Pancreas (tissue), 10 donors: ENCODE measurements at regions of chr9 and their contacts with region 1.

Region 1: DNA sequence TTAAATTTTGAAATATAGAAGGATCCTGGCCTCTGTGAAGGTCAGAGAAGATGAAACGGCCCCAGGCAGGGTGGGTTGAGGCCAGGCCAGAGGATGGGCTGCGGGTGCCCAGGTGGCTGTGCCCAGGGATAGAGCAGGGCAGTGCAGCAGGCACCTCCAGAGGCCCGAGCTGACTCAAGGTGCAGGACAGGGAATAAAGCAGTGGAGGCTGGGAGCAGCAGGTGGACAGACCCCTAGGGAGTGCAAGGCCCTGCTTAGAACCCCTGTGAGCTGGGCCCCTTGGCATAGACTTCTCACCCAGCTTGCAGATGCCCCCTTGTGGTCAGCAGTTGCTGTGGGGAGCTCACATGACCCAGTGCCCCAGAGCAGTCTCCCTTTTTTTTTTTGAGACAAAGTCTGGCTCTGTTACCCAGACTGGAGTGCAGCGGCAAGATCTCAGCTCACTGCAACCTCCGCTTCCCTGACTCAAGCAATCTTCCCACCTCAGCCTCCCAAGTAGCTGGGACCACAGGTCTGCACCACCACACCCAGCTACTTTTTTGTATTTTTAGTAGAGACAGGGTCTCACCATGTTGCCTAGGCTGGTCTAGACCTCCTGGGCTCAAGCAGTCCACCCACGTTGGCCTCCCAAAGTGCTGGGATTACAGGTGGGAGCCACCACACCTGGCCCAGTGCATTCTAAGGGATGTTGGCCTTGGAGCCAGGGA is 118.8 kb downstream of the WNK2 start:
- DNase-seq: peak; percentile 57 to 76 (median 73)
- ATAC-seq: peak; percentile 59 to 77 (median 68)
- H3K4me3 ChIP-seq: no peak overlapping the region
- H3K27ac ChIP-seq: peak overlapping the region in 1 of 4 donors; percentile 22
- H3K4me1 ChIP-seq: peaks cover 0 to 2% (median 0%) of the 10 kb centered on the region in 3 donors
- H3K27me3 ChIP-seq: no peaks in the 10 kb centered on the region
- CTCF ChIP-seq: peak; percentile 34 to 51 (median 49)

Region 2: DNA sequence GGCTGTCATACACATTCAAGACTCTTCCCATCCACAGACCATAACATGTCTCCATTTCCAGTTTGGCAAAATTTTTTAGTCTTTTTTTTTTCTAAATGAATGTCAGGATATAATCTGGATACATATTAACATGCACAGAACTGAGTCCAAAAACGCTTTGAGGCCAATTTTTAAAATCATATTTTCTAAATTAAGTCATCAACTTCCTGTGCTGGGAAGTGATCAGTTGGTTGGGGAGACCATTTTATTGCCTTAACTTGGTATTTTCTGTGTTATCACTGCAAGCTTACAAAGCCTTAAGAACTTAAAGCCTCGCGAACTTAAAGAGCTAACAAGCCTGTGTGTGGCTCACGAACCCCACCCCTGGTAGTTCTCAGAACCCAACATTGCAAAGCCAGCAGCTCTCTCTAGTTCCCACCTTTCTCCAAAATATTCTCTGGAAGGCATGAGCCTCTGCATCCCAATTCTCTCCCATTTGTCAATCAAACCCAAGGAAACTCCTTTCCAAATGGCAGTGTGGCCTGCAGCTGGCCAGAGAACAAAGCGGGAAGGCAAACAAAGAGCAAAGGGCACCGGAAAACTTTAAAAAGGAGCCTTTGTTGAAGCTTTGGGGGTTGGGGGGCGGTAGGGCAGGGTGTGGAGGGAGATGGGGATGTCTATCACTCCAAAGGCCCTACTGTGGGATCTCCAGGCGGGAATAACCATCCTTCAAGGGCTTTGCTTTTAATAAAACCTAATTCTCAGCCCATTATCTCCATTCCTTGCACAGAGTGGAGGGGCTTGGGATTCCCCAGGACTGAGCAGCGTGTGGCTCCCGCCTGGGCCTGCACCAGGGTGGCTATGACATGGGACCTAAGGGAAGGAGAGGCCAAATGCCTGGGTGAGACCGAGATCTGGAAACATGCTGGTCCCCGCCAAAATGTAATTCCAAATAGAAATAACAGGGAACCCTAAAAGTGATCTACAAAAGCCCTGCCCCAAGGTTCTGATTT is 1417.7 kb before region 1 on chr9:
- intact Hi-C with region 1: no loop called
- DNase-seq: no peak
- ATAC-seq: no peak
- H3K4me3 ChIP-seq: no peak overlapping the region
- H3K27ac ChIP-seq: no peak overlapping the region
- H3K4me1 ChIP-seq: no peaks in the 10 kb centered on the region
- H3K27me3 ChIP-seq: no peaks in the 10 kb centered on the region
- CTCF ChIP-seq: no peak

Region 3: GRCh38 chr9:93119953-93120845 is 182.5 kb before region 1 on chr9:
- intact Hi-C with region 1: no loop called
- DNase-seq: peak; percentile 85 to 94 (median 92)
- ATAC-seq: peak; percentile 89 to 92 (median 90)
- H3K4me3 ChIP-seq: no peak overlapping the region
- H3K27ac ChIP-seq: peak overlapping the region in 2 of 4 donors; percentile 39 to 64
- H3K4me1 ChIP-seq: peaks cover 3 to 9% (median 4%) of the 10 kb centered on the region in 3 donors
- H3K27me3 ChIP-seq: no peaks in the 10 kb centered on the region
- CTCF ChIP-seq: peak in 3 of 4 donors; percentile 26 to 43 (median 31)

Region 4: DNA sequence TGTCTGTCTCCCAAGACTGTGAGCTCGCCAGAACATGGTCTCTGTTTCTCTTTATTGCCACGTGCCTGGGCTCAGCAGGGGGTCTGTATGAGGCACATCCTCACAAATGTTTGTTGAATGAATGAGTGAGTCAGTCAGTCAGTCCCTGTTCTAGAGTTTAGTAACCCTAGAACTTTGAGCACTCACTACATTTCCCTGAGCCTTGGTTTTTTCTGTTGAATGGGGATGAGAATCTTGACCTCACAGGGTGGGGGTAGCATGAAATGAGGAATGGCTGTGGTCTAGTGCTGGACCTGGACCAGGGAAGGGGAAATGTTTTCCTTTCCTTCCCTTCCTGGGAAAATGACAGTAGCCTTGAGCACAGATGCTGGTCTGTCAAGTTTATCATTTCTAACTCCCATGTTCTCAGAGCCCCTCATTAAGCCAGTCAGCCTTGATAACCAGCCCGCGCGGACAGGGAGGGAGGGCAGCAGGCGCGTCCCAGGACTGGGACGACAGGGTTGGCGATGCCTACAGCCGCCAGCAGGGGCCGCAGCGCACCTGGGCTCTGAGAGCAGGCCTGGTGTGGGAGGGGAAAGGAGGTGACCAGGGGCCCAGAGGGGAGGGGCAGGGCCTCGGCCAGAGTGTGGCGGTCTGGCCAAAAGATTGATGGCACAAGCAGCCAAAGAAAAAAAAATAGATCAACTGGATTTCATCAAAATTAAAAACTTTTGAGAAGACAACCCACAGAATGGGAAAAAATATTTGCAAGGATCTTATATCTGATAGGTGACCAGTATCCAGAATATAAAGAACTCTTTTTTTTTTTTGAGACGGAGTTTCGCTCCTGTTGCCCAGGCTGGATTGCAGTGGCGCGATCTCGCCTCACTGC is 142.9 kb before region 1 on chr9:
- intact Hi-C with region 1: loop called (anchors 5 kb)
- DNase-seq: peak; percentile 84 to 97 (median 89)
- ATAC-seq: peak; percentile 97 to 100 (median 100)
- H3K4me3 ChIP-seq: no peak overlapping the region
- H3K27ac ChIP-seq: no peak overlapping the region
- H3K4me1 ChIP-seq: no peaks in the 10 kb centered on the region
- H3K27me3 ChIP-seq: no peaks in the 10 kb centered on the region
- CTCF ChIP-seq: peak; percentile 81 to 94 (median 93)

Region 5: GRCh38 chr9:93183609-93184431 is 118.9 kb before region 1 on chr9 and contains the start of gene WNK2:
- intact Hi-C with region 1: loop called in 1 of 3 experiments (anchors 10 kb)
- DNase-seq: peak in 5 of 6 donors; percentile 58 to 85 (median 77)
- ATAC-seq: peak; percentile 70 to 83 (median 76)
- H3K4me3 ChIP-seq: peak within 1 kb of the TSS; percentile 59 to 76 (median 66)
- H3K27ac ChIP-seq: peak within 1 kb of the TSS; percentile 35 to 85 (median 74)
- H3K4me1 ChIP-seq: peaks cover 13 to 27% (median 23%) of the 10 kb centered on the region in 3 donors
- H3K27me3 ChIP-seq: no peaks in the 10 kb centered on the region
- CTCF ChIP-seq: no peak
- total RNA-seq, gene WNK2: 53.5 to 114 (median 89.4) TPM

Region 6: DNA sequence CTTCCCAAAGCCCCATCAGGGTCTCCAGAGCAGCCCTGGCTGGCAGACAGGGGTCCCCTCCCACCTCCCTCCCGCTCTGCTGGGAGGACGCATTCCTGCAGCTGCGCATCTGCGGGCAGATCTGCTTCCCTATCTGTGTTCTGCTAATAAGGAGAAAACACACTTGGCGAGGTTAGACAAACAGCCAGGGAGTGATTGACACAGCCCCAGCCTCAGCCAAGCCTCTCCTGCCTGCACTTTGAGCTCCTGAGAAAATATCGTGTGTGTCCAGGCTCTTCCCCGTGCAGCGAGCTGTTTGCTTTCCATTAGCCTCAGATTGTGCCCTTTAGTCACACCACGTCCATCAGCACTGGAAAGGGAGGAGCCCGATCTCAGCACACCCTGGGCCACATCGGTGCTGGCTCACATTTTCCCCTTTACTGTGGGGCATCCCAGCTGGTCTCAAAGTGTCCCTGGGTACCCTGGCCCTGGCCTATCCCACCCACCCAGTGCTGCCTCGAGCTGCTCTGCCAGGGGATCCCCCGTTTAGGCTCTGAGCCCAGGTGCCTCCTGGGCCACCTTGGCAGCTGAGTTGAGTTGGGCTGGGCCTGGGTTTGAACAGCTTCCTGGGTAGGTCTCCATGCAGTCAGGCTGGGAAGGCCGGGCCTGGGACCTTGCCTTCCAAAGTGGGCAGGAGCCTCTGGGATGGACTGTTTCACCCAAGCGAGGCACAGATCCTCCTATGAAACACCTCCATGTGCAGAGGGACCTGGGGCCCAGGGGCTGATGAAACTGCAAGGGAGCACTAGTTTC is 591.4 kb after region 1 on chr9:
- intact Hi-C with region 1: no loop called
- DNase-seq: peak; percentile 66 to 89 (median 86)
- ATAC-seq: peak; percentile 94 to 98 (median 98)
- H3K4me3 ChIP-seq: no peak overlapping the region
- H3K27ac ChIP-seq: peak overlapping the region; percentile 6 to 85 (median 68)
- H3K4me1 ChIP-seq: peaks cover 12 to 17% (median 17%) of the 10 kb centered on the region in 3 donors
- H3K27me3 ChIP-seq: no peaks in the 10 kb centered on the region
- CTCF ChIP-seq: no peak